ENCODE measurements at regions of chr7 and their contacts with region 1.

Region 1: DNA sequence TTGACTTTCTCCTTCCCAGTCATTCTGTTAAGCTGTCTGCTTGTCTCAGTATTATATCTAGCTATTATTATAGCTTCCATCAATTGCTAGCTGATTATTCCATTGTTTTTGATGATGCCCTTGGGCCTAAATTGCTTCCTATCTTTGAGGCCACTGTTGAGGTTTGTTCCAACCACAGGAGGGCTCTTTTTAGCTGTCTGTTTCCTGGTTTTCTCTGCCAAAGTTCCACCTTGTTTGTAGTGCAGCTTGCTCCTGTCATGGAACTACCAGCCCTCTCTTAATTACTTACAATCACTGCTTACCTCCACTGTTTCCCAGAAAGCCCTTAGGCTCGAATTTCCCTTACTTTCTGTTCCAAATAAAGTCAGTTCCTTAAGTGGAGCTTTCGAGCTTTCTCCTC is 118.7 kb upstream of the SEC61G start:
- DNase-seq: peak; percentile 35 to 73
- H3K4me3 ChIP-seq: no peak overlapping the region
- H3K27ac ChIP-seq: no peak overlapping the region
- H3K4me1 ChIP-seq: peaks cover 8% of the 10 kb centered on the region
- H3K27me3 ChIP-seq: no peaks in the 10 kb centered on the region
- CTCF ChIP-seq: peak; percentile 67

Region 2: DNA sequence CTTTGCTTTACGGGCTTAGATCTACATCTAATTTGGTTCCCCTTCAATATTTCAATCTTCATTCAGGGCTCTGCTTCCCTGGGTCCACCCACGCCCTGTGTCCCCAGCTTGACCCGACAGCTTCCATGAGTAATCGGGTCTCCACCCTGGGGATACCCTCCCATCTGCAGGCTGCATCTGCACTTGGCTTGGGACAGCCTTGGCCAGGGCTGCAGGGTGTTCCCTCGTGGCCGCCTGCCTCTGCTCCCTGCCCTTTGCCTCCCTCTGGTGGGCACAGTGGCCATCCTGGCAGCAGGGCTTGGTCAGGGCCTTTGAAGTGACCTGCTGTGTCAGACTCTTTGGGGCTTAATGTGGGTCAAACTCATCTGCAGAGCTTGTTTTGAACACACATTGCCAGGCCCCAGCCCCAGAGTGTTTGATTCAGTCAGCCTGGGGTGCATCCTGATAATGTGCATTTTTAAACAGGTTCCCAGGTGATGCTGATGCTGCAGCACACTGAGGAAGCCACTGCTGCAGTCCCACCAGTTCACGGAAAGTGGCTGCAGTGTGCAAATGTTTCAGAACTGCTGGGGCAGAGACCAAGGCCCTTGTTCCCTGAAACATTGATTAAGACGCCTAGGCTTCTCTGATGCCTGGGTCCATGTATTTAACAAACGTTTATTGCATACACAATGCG is 38.0 kb before region 1 on chr7:
- CTCF ChIA-PET with region 1: no interaction called
- POLR2A ChIA-PET with region 1: interaction called, 3 read pairs
- intact Hi-C with region 1: loop called (anchors 5 kb)
- DNase-seq: peak; percentile 91 to 95
- H3K4me3 ChIP-seq: 0 out of 2 replicates have a peak overlapping the region, but pooled peaks have one; percentile 2
- H3K27ac ChIP-seq: peak overlapping the region; percentile 51
- H3K4me1 ChIP-seq: peaks cover 48% of the 10 kb centered on the region
- H3K27me3 ChIP-seq: no peaks in the 10 kb centered on the region
- CTCF ChIP-seq: peak; percentile 100

Region 3: GRCh38 chr7:54864663-54865062 is 13.0 kb before region 1 on chr7:
- CTCF ChIA-PET with region 1: no interaction called
- POLR2A ChIA-PET with region 1: no interaction called
- intact Hi-C with region 1: no loop called
- DNase-seq: no peak
- H3K4me3 ChIP-seq: no peak overlapping the region
- H3K27ac ChIP-seq: no peak overlapping the region
- H3K4me1 ChIP-seq: peaks cover 6% of the 10 kb centered on the region; the same call in 1 of the 2 replicates
- H3K27me3 ChIP-seq: no peaks in the 10 kb centered on the region
- CTCF ChIP-seq: no peak

Region 4: DNA sequence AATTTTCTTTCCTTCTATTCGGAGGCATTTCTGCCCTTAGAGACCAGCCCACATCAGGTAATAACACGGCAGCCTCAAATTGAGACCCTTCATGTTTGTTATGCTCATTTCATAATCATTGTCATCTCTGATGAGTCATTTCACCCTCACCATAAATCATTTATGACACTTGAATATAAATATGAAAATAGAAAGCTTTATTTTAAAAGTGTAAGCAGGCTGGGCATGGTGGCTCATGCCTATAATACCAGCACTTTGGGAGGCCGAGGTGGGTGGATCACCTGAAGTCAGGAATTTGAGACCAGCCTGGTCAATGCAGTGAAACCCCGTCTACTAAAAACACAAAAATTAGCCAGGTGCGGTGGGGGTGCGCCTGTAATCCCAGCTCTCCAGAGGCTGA is 83.7 kb after region 1 on chr7:
- CTCF ChIA-PET with region 1: interaction called, 4 read pairs
- POLR2A ChIA-PET with region 1: interaction called, 10 read pairs
- intact Hi-C with region 1: loop called (anchors 5 kb)
- DNase-seq: peak; percentile 88 to 98
- H3K4me3 ChIP-seq: peak overlapping the region; percentile 12; the same call in 1 of the 2 replicates
- H3K27ac ChIP-seq: peak overlapping the region; percentile 71
- H3K4me1 ChIP-seq: peaks cover 34% of the 10 kb centered on the region
- H3K27me3 ChIP-seq: no peaks in the 10 kb centered on the region
- CTCF ChIP-seq: no peak

Region 5: GRCh38 chr7:55044791-55045190 is 167.1 kb after region 1 on chr7:
- CTCF ChIA-PET with region 1: interaction called, 4 read pairs
- POLR2A ChIA-PET with region 1: no interaction called
- intact Hi-C with region 1: loop called (anchors 5 kb)
- DNase-seq: no peak
- H3K4me3 ChIP-seq: no peak overlapping the region
- H3K27ac ChIP-seq: peak overlapping the region; percentile 45
- H3K4me1 ChIP-seq: peaks cover 60% of the 10 kb centered on the region
- H3K27me3 ChIP-seq: no peaks in the 10 kb centered on the region
- CTCF ChIP-seq: no peak

Region 6: GRCh38 chr7:55070854-55071253 is 193.2 kb after region 1 on chr7:
- CTCF ChIA-PET with region 1: no interaction called
- POLR2A ChIA-PET with region 1: no interaction called
- intact Hi-C with region 1: no loop called
- DNase-seq: no peak
- H3K4me3 ChIP-seq: no peak overlapping the region
- H3K27ac ChIP-seq: peak overlapping the region; percentile 86
- H3K4me1 ChIP-seq: peaks cover 64% of the 10 kb centered on the region
- H3K27me3 ChIP-seq: no peaks in the 10 kb centered on the region
- CTCF ChIP-seq: no peak